MCF 10A (cell line): ENCODE measurements at regions of chr21 and their contacts with region 1.

Region 1: GRCh38 chr21:29477941-29478340 is 179.2 kb downstream of the BACH1 start:
- DNase-seq: peak; percentile 4
- H3K4me3 Mint-ChIP-seq: no peak overlapping the region
- H3K27ac Mint-ChIP-seq: no peak overlapping the region
- H3K4me1 Mint-ChIP-seq: no peaks in the 10 kb centered on the region
- H3K27me3 Mint-ChIP-seq: no peaks in the 10 kb centered on the region
- CTCF ChIP-seq: no peak

Region 2: DNA sequence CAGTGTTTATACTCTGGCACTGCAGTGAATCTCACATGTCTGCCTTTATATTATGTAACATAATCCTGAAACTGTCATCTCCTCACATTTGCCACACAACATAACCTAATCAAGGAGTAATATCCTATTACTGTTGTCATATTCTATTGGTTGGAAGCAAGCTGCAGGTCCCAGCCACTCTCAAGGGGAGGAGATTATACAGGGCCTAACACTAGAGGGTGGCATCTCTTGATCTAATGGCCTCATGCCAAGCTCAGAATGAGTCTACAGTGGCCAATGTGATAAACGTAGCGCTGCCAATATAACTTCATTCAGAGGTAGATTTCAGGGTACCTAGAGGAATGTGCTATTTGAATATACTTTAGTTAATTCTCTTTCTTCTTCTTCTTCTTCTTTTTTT is 12.4 kb before region 1 on chr21:
- CTCF ChIA-PET with region 1: interaction called, 25 read pairs
- POLR2A ChIA-PET with region 1: no interaction called
- intact Hi-C with region 1: no loop called
- DNase-seq: no peak
- H3K4me3 Mint-ChIP-seq: no peak overlapping the region
- H3K27ac Mint-ChIP-seq: no peak overlapping the region
- H3K4me1 Mint-ChIP-seq: no peaks in the 10 kb centered on the region
- H3K27me3 Mint-ChIP-seq: no peaks in the 10 kb centered on the region
- CTCF ChIP-seq: no peak

Region 3: GRCh38 chr21:29499734-29500343 is 21.9 kb after region 1 on chr21:
- CTCF ChIA-PET with region 1: interaction called, 10 read pairs
- POLR2A ChIA-PET with region 1: no interaction called
- intact Hi-C with region 1: no loop called
- DNase-seq: peak; percentile 52
- H3K4me3 Mint-ChIP-seq: no peak overlapping the region
- H3K27ac Mint-ChIP-seq: no peak overlapping the region
- H3K4me1 Mint-ChIP-seq: peaks cover 6% of the 10 kb centered on the region
- H3K27me3 Mint-ChIP-seq: no peaks in the 10 kb centered on the region
- CTCF ChIP-seq: peak; percentile 48

Region 4: GRCh38 chr21:29849735-29850176 is 371.8 kb after region 1 on chr21:
- CTCF ChIA-PET with region 1: interaction called, 63 read pairs
- POLR2A ChIA-PET with region 1: interaction called, 3 read pairs
- intact Hi-C with region 1: loop called (anchors 1 kb)
- DNase-seq: peak; percentile 69
- H3K4me3 Mint-ChIP-seq: no peak overlapping the region
- H3K27ac Mint-ChIP-seq: no peak overlapping the region
- H3K4me1 Mint-ChIP-seq: no peaks in the 10 kb centered on the region
- H3K27me3 Mint-ChIP-seq: no peaks in the 10 kb centered on the region
- CTCF ChIP-seq: peak; percentile 77